CD4-positive, alpha-beta T cell (primary cell): ENCODE measurements at regions of chr1 and their contacts with region 1.

Region 1: GRCh38 chr1:1890506-1891348 is at the start of gene GNB1:
- DNase-seq: peak; percentile 73 to 97 (median 86)
- ATAC-seq: peak; percentile 67
- H3K4me3 ChIP-seq: peak within 1 kb of the TSS; percentile 77
- H3K4me3 Mint-ChIP-seq: peak within 1 kb of the TSS; percentile 92
- H3K27ac ChIP-seq: peak within 1 kb of the TSS; percentile 82 to 84
- H3K27ac Mint-ChIP-seq: peak within 1 kb of the TSS; percentile 98
- H3K4me1 ChIP-seq: peaks cover 77% of the 10 kb centered on the region
- H3K4me1 Mint-ChIP-seq: peaks cover 59% of the 10 kb centered on the region
- H3K27me3 ChIP-seq: no peaks in the 10 kb centered on the region
- H3K27me3 Mint-ChIP-seq: no peaks in the 10 kb centered on the region
- CTCF ChIP-seq: no peak
- total RNA-seq, gene GNB1: 138 to 149 TPM

Region 2: GRCh38 chr1:1777950-1778662 is 112.6 kb before region 1 on chr1 and contains the start of gene NADK:
- CTCF ChIA-PET with region 1: interaction called, 4 read pairs
- POLR2A ChIA-PET with region 1: interaction called, 7 read pairs
- intact Hi-C with region 1: loop called in 1 of 2 experiments (anchors 2 kb)
- DNase-seq: peak; percentile 42 to 90 (median 68)
- ATAC-seq: peak; percentile 52
- H3K4me3 ChIP-seq: peak within 1 kb of the TSS; percentile 68
- H3K4me3 Mint-ChIP-seq: peak within 1 kb of the TSS; percentile 94
- H3K27ac ChIP-seq: peak within 1 kb of the TSS; percentile 82 to 95
- H3K27ac Mint-ChIP-seq: peak within 1 kb of the TSS; percentile 93
- H3K4me1 ChIP-seq: peaks cover 73% of the 10 kb centered on the region
- H3K4me1 Mint-ChIP-seq: peaks cover 62% of the 10 kb centered on the region
- H3K27me3 ChIP-seq: no peaks in the 10 kb centered on the region
- H3K27me3 Mint-ChIP-seq: no peaks in the 10 kb centered on the region
- CTCF ChIP-seq: no peak
- total RNA-seq, gene NADK: 19.9 to 25.1 TPM

Region 3: GRCh38 chr1:1841575-1841995 is 49.1 kb before region 1 on chr1:
- CTCF ChIA-PET with region 1: no interaction called
- POLR2A ChIA-PET with region 1: interaction called, 3 read pairs
- intact Hi-C with region 1: loop called (anchors 5 kb)
- DNase-seq: no peak
- ATAC-seq: peak; percentile 43
- H3K4me3 ChIP-seq: no peak overlapping the region
- H3K4me3 Mint-ChIP-seq: peak overlapping the region; percentile 50
- H3K27ac ChIP-seq: no peak overlapping the region
- H3K27ac Mint-ChIP-seq: peak overlapping the region; percentile 85
- H3K4me1 ChIP-seq: peaks cover 48% of the 10 kb centered on the region
- H3K4me1 Mint-ChIP-seq: peaks cover 53% of the 10 kb centered on the region
- H3K27me3 ChIP-seq: no peaks in the 10 kb centered on the region
- H3K27me3 Mint-ChIP-seq: no peaks in the 10 kb centered on the region
- CTCF ChIP-seq: no peak

Region 4: DNA sequence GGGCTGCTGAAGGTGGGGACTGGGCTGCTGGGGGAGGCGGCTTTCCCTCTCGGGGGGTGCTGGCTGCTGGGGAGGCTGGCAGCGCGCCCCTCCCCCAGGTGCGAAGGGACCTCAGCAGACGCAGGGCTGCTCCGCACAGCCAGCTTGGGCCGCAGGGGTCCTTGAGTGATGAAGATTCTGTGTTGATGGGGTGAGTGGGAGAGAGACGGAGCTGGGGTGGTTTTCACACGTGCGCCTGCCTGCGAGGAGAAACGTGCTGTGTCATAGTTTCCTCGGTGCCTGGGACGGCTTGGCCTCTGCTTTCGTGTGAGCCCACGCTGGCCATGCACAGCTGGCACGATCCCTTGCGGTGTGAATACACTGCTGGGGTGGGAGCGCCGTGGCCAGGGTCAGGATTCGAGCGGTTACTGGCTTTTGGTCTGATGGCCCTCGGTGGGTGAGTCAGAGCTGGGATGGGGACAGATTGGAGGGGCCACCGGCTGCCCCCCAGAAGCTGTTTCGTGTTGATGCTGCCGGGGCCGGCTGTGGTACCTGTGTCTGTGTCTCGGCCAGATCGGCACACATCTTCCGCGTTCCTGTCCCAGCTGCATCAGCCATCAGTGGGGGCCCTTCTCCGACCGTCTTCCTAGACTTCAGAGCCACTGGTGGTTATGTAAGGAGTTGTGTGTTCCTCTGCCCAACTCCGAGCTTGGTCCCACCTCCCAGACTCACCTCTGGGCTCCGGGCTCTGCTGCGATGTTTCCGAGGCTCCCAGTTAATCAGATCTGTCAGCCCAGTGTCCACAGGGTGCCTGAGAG is 184.4 kb after region 1 on chr1:
- CTCF ChIA-PET with region 1: no interaction called
- POLR2A ChIA-PET with region 1: no interaction called
- intact Hi-C with region 1: no loop called
- DNase-seq: no peak
- ATAC-seq: no peak
- H3K4me3 ChIP-seq: no peak overlapping the region
- H3K4me3 Mint-ChIP-seq: no peak overlapping the region
- H3K27ac ChIP-seq: no peak overlapping the region
- H3K27ac Mint-ChIP-seq: no peak overlapping the region
- H3K4me1 ChIP-seq: peaks cover 6% of the 10 kb centered on the region
- H3K4me1 Mint-ChIP-seq: no peaks in the 10 kb centered on the region
- H3K27me3 ChIP-seq: no peaks in the 10 kb centered on the region
- H3K27me3 Mint-ChIP-seq: no peaks in the 10 kb centered on the region
- CTCF ChIP-seq: no peak